Heart right ventricle (tissue), 16 donors: ENCODE measurements at regions of chr6 and their contacts with region 1.

Region 1: DNA sequence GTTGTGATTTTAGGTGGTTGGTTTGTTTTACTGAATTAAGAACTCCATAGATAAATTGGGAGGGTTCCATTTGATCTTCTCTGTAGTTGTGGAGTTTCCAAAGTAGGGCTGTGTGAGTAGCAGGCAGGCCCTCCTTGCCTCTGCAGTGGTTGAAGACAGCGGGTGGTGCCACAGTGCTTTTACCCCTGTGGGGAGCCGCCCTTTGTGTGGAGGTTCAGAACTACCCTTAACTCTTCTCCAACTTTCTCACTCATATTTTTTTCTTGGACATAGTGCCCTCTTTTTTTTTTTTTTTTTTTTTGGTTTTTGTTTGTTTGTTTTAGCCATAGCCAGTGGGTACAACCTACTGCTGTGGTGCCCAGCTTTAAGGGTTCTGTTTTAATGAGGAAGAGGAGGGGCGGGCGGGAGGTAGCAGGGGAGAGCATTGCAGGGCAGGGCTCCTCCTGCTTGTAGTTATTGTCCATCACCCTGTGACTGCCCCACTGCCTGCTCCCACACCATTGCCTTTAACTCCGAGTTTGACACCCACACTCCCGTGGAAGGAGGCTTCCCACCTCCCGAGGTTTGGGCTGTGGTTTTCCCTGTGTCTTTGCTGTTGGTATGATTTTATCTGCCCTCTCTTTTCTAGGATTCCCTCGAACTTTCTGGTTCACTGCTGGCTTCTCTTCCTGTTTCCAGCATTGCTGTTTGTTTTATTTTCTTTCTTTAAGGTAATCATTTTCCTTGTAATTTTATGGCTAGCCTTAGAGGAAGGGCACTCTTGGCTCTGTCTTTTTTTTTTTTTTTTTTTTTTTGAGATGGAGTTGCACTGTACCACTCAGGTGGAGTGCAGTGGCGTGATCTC is 50.7 kb downstream of the TIAM2 start:
- DNase-seq: no peak
- ATAC-seq: no peak
- H3K4me3 ChIP-seq: no peak overlapping the region
- H3K27ac ChIP-seq: no peak overlapping the region
- H3K4me1 ChIP-seq: peaks cover 0 to 12% (median 4%) of the 10 kb centered on the region in 9 donors
- H3K27me3 ChIP-seq: no peaks in the 10 kb centered on the region
- CTCF ChIP-seq: no peak

Region 2: DNA sequence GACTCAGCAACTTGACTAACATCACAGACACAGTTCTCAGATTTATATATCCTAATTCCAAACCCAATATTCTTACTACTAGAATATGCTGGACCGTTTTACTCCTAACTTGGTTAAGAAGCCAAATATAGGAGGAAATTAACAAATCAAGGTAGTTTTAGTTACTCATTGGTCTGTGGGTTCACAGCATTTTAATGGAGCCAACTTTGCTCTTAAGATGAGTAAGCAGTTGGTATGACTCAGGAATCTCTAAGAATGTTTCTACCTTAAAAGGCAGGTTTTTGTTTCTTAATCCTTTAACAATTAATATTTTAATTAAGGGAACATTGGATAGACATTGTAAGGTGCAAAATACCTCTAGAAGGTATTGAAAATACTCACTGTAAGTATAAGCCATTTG is 975.1 kb before region 1 on chr6:
- intact Hi-C with region 1: no loop called
- DNase-seq: no peak
- ATAC-seq: no peak
- H3K4me3 ChIP-seq: no peak overlapping the region
- H3K27ac ChIP-seq: no peak overlapping the region
- H3K4me1 ChIP-seq: no peaks in the 10 kb centered on the region
- H3K27me3 ChIP-seq: no peaks in the 10 kb centered on the region
- CTCF ChIP-seq: no peak

Region 3: DNA sequence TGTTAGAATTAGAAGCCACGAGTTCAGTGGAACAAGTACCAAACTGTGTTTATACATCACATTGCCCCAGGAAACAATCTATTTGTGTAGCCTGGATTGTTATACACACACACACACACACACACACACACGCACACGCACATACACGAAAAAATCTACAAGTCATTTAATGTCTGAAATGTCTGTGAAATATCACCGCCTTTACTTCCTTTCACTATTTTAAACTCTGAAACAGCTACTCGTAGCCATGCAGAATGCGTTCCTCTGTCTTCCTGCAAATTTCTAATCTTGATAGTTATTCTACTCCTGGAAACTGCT is 396.9 kb before region 1 on chr6:
- intact Hi-C with region 1: no loop called
- DNase-seq: no peak
- ATAC-seq: no peak
- H3K4me3 ChIP-seq: no peak overlapping the region
- H3K27ac ChIP-seq: no peak overlapping the region
- H3K4me1 ChIP-seq: peaks cover 0 to 17% (median 7%) of the 10 kb centered on the region in 9 donors
- H3K27me3 ChIP-seq: no peaks in the 10 kb centered on the region
- CTCF ChIP-seq: no peak

Region 4: GRCh38 chr6:155088856-155089255 is 43.1 kb after region 1 on chr6:
- intact Hi-C with region 1: loop called in 1 of 10 experiments (anchors 1 kb)
- DNase-seq: no peak
- ATAC-seq: no peak
- H3K4me3 ChIP-seq: no peak overlapping the region
- H3K27ac ChIP-seq: no peak overlapping the region
- H3K4me1 ChIP-seq: peaks cover 0 to 5% (median 0%) of the 10 kb centered on the region in 9 donors
- H3K27me3 ChIP-seq: no peaks in the 10 kb centered on the region
- CTCF ChIP-seq: no peak